WTC11 (cell line): ENCODE measurements at regions of chr7 and their contacts with region 1.

Region 1: DNA sequence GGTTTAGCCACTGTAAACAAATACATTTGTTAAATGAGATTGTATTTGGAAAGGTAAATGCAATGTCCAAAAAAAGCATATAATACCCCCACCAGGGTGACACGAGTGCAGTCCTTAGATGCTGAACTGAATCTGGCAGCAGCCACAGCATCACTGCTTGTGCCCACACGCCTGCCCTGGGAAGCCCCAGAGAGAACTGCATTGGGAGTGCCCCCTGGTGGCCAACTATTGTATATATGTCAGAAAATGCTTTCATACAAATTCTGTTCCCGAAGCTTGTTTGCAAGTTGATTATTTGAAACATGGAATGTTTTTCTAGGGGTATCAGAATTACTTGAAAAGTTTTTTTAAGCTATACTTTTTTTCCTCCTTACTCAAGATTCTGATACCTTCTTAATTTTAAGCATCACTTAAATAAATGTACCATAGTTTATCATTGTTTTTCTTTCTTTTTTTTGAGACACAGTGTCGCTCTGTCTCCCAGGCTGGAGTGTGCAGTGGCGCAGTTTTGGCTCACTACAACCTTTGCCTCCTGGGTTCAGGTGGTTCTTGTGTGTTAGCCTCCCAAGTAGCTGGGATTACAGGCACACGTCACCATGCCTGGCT is 50.1 kb downstream of the LANCL2 start:
- DNase-seq: peak; percentile 82
- ATAC-seq: peak; percentile 78
- H3K4me3 Mint-ChIP-seq: no peak overlapping the region
- H3K27ac Mint-ChIP-seq: no peak overlapping the region
- H3K4me1 Mint-ChIP-seq: peaks cover 2% of the 10 kb centered on the region; the same call in 1 of the 2 replicates
- H3K27me3 Mint-ChIP-seq: no peaks in the 10 kb centered on the region
- CTCF ChIP-seq: peak; percentile 79

Region 2: GRCh38 chr7:55280031-55280454 is 135.2 kb before region 1 on chr7:
- CTCF ChIA-PET with region 1: interaction called, 20 read pairs
- POLR2A ChIA-PET with region 1: no interaction called
- DNase-seq: peak; percentile 74
- ATAC-seq: peak; percentile 97
- H3K4me3 Mint-ChIP-seq: no peak overlapping the region
- H3K27ac Mint-ChIP-seq: no peak overlapping the region
- H3K4me1 Mint-ChIP-seq: peaks cover 9% of the 10 kb centered on the region
- H3K27me3 Mint-ChIP-seq: no peaks in the 10 kb centered on the region
- CTCF ChIP-seq: peak; percentile 52

Region 3: GRCh38 chr7:55515569-55516279 is 100.4 kb after region 1 on chr7:
- CTCF ChIA-PET with region 1: no interaction called
- POLR2A ChIA-PET with region 1: no interaction called
- DNase-seq: no peak
- ATAC-seq: no peak
- H3K4me3 Mint-ChIP-seq: no peak overlapping the region
- H3K27ac Mint-ChIP-seq: no peak overlapping the region
- H3K4me1 Mint-ChIP-seq: peaks cover 40% of the 10 kb centered on the region
- H3K27me3 Mint-ChIP-seq: no peaks in the 10 kb centered on the region
- CTCF ChIP-seq: no peak

Region 4: GRCh38 chr7:55569797-55570196 is 154.5 kb after region 1 on chr7:
- CTCF ChIA-PET with region 1: no interaction called
- POLR2A ChIA-PET with region 1: no interaction called
- DNase-seq: no peak
- ATAC-seq: no peak
- H3K4me3 Mint-ChIP-seq: peak overlapping the region; percentile 91
- H3K27ac Mint-ChIP-seq: 0 out of 2 replicates have a peak overlapping the region, but pooled peaks have one; percentile 63
- H3K4me1 Mint-ChIP-seq: peaks cover 77% of the 10 kb centered on the region
- H3K27me3 Mint-ChIP-seq: peaks cover 14% of the 10 kb centered on the region
- CTCF ChIP-seq: no peak

Region 5: DNA sequence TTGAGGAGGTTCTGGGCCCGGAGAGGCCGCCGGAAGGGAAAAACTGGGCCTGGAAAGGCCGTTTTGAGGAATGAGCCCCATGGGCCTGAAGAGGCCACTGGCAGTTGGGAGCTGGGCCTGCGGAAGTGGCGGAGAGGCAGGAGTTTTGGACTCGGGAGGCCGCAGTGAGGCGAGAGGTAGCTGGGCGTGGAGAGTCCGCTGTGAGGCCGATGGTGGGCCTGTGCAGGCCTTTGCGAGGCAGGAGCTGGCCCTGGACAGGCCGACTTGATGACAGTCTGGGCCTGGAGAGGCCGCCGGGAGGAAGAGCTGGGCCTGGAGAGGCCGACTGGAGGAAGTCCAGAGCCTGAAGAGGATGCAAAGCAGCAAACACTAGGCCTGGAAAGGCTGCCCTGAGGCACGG is 959.9 kb after region 1 on chr7:
- CTCF ChIA-PET with region 1: no interaction called
- POLR2A ChIA-PET with region 1: no interaction called
- DNase-seq: no peak
- ATAC-seq: no peak
- H3K4me3 Mint-ChIP-seq: no peak overlapping the region
- H3K27ac Mint-ChIP-seq: no peak overlapping the region
- H3K4me1 Mint-ChIP-seq: no peaks in the 10 kb centered on the region
- H3K27me3 Mint-ChIP-seq: peaks cover 4% of the 10 kb centered on the region; the same call in 1 of the 2 replicates
- CTCF ChIP-seq: no peak